ENCODE measurements at regions of chr2 and their contacts with region 1.

Region 1: DNA sequence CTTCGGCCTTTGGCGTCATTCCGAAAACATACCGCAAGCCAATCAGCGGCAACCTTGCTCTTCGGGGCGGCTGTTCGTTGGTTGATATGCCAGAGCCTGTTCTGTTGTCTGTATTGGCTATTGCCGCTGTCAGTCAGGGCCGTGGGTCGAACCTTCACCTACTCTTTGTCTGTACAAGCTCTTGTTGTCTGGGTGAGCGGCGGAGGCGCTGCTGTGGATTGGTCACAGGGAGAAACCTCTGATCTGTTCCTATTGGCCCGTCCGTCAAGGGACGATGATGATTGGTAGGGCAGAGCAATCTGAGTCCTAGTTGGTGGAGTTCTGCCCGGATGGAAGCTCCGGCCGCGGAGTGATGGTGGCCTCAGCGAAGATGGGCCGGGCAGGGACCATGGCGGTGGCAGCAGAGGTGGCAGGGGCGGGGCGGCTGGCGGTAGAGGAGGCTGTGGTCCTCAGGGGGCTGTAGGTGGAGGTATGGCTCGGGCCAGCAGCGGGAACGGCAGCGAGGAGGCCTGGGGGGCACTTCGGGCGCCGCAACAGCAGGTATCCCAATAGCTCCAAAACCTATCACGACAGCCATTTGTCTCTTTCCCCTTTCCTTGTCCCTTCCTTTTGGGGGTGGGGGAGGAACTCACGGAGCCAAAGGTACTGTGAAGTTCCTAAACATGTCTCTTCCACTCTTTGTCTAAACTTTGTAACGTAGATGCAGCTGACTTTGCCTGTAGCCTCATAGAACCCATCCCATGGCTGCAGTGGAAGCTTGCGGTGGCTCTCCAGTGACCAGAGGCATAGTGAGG is at the start of gene WBP1:
- DNase-seq: peak; percentile 100
- ATAC-seq: peak; percentile 87
- H3K4me3 ChIP-seq: peak within 1 kb of the TSS; percentile 70 to 98
- H3K27ac ChIP-seq: peak within 1 kb of the TSS; percentile 89
- H3K4me1 ChIP-seq: peaks cover 12 to 42% of the 10 kb centered on the region in 2 experiments
- H3K27me3 ChIP-seq: no peaks in the 10 kb centered on the region
- CTCF ChIP-seq: no peak
- POLR2A ChIP-seq: peak; percentile 6
- RAD21 ChIP-seq: no peak
- total RNA-seq, gene WBP1: 64.7 TPM

Region 2: GRCh38 chr2:73233154-73233931 is 1225.0 kb before region 1 on chr2 and contains the start of gene PRADC1:
- CTCF ChIA-PET with region 1: no interaction called
- POLR2A ChIA-PET with region 1: no interaction called
- RAD21 ChIA-PET with region 1: no interaction called
- intact Hi-C with region 1: loop called (anchors 10 kb)
- DNase-seq: peak; percentile 99
- ATAC-seq: peak; percentile 89
- H3K4me3 ChIP-seq: peak within 1 kb of the TSS; percentile 90 to 93
- H3K27ac ChIP-seq: peak within 1 kb of the TSS; percentile 88
- H3K4me1 ChIP-seq: peaks cover 10 to 27% of the 10 kb centered on the region in 2 experiments; a peak in 3 of 4 replicates
- H3K27me3 ChIP-seq: no peaks in the 10 kb centered on the region
- CTCF ChIP-seq: no peak
- POLR2A ChIP-seq: no peak
- RAD21 ChIP-seq: no peak
- total RNA-seq, gene PRADC1: 8.6 TPM

Region 3: GRCh38 chr2:74010087-74010661 is 448.2 kb before region 1 on chr2:
- CTCF ChIA-PET with region 1: no interaction called
- POLR2A ChIA-PET with region 1: no interaction called
- RAD21 ChIA-PET with region 1: no interaction called
- intact Hi-C with region 1: no loop called
- DNase-seq: no peak
- ATAC-seq: no peak
- H3K4me3 ChIP-seq: no peak overlapping the region
- H3K27ac ChIP-seq: no peak overlapping the region
- H3K4me1 ChIP-seq: peaks cover 6 to 15% of the 10 kb centered on the region in 2 experiments; a peak in 3 of 4 replicates
- H3K27me3 ChIP-seq: no peaks in the 10 kb centered on the region
- CTCF ChIP-seq: no peak
- POLR2A ChIP-seq: no peak
- RAD21 ChIP-seq: no peak

Region 4: DNA sequence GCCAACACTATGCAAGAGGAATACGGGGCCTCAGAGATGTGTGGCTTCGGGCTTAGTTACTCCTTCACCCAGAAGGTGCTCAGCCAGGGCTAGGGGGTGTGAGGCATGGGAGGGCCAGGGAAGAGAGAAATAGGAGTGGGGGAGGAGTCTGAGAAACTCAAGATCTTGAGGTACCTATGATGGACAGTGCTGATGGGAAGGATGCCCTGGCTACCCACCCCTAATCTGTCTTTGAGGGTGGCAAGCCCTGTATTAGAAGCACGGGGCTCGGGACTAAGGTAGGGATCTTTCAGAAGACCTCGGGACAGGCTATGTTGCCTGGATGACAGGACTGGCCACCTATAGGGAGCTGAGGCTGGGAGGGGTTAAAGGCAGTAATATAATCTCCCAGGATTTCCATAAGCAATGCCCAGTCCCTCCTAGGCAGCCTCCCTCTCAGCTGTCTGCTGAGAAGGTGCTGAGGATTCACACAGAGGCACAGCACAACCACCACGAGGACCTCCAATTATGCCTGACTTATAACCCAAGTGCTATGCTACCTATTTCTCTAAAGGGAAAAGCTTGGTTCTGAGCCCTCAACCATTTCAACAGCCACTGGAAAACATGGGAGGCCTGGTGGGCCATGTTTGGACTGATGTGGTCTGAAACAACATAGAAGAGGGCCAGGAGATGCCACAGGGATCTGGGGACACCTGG is 236.6 kb before region 1 on chr2:
- CTCF ChIA-PET with region 1: no interaction called
- POLR2A ChIA-PET with region 1: no interaction called
- RAD21 ChIA-PET with region 1: no interaction called
- intact Hi-C with region 1: no loop called
- DNase-seq: no peak
- ATAC-seq: peak; percentile 25
- H3K4me3 ChIP-seq: no peak overlapping the region
- H3K27ac ChIP-seq: no peak overlapping the region
- H3K4me1 ChIP-seq: 0 out of 4 replicates have a peak, but pooled peaks cover 0 to 6% of the 10 kb centered on the region in 2 experiments
- H3K27me3 ChIP-seq: no peaks in the 10 kb centered on the region
- CTCF ChIP-seq: no peak
- POLR2A ChIP-seq: no peak
- RAD21 ChIP-seq: no peak

Region 5: DNA sequence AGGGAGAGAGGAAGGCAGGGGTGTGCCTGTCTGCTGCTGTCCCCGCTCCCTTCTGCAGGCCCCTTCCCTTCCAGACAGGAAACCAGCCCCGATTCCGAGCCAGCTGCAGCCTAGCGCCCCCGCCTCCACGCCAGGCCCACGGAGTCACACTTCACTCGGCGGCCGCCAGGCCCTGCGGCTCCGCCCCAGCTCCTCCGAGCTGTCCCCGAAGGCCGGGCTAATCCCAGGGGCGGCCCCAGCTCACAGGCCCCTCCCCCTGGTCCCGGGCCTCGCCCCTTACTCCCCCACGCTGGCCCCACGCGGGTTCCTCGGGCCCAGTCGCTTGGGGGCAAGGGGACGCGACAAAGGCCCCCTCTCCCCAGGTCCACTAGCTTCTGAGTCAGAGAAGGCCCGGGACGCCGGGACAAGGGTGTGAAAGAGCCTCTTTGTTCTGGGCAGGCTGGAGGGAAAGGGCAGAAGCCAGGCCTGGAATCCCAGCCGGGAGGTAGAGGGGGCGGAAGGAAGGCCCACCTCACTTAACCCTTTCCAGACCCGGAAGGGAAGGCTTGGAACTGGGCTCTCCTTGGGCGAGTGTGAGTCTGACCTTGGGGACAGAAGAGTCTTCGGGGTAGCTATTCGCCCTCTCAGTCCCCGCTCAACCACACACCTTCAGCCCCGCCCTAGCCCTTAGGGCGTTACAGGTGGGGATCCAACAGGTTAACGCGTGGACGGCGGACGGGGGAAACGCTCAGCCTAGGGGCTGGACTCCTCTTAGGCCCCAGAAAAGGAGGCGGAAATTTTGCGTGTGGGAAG is 17.8 kb before region 1 on chr2:
- CTCF ChIA-PET with region 1: no interaction called
- POLR2A ChIA-PET with region 1: interaction called, 13 read pairs
- RAD21 ChIA-PET with region 1: interaction called in 1 of 2 experiments, 3 read pairs
- intact Hi-C with region 1: loop called (anchors 1 kb)
- DNase-seq: peak; percentile 80
- ATAC-seq: peak; percentile 84
- H3K4me3 ChIP-seq: peak overlapping the region; percentile 66 to 69
- H3K27ac ChIP-seq: peak overlapping the region; percentile 99
- H3K4me1 ChIP-seq: peaks cover 29 to 47% of the 10 kb centered on the region in 2 experiments
- H3K27me3 ChIP-seq: no peaks in the 10 kb centered on the region
- CTCF ChIP-seq: 0 out of 6 replicates have a peak, but pooled peaks of 1 of the 3 experiments have one; percentile 3
- POLR2A ChIP-seq: no peak
- RAD21 ChIP-seq: no peak

Region 6: GRCh38 chr2:74472086-74472944 is 14.0 kb after region 1 on chr2 and contains the start of gene MRPL53:
- CTCF ChIA-PET with region 1: interaction called, 6 read pairs
- POLR2A ChIA-PET with region 1: interaction called, 21 read pairs
- RAD21 ChIA-PET with region 1: interaction called in 1 of 2 experiments, 3 read pairs
- intact Hi-C with region 1: no loop called
- DNase-seq: peak; percentile 89
- ATAC-seq: peak; percentile 86
- H3K4me3 ChIP-seq: peak within 1 kb of the TSS; percentile 94 to 96
- H3K27ac ChIP-seq: peak within 1 kb of the TSS; percentile 82
- H3K4me1 ChIP-seq: peaks cover 12 to 18% of the 10 kb centered on the region in 2 experiments; a peak in 3 of 4 replicates
- H3K27me3 ChIP-seq: no peaks in the 10 kb centered on the region
- CTCF ChIP-seq: no peak
- POLR2A ChIP-seq: peak; percentile 93
- RAD21 ChIP-seq: no peak
- total RNA-seq, gene MRPL53: 65.4 TPM

Region 7: GRCh38 chr2:74587664-74588277 is 129.4 kb after region 1 on chr2:
- CTCF ChIA-PET with region 1: no interaction called
- POLR2A ChIA-PET with region 1: no interaction called
- RAD21 ChIA-PET with region 1: no interaction called
- intact Hi-C with region 1: no loop called
- DNase-seq: peak; percentile 8
- ATAC-seq: peak; percentile 72
- H3K4me3 ChIP-seq: no peak overlapping the region
- H3K27ac ChIP-seq: no peak overlapping the region
- H3K4me1 ChIP-seq: peaks cover 12 to 15% of the 10 kb centered on the region in 2 experiments
- H3K27me3 ChIP-seq: no peaks in the 10 kb centered on the region
- CTCF ChIP-seq: peak; percentile 32 to 52 (median 37); a peak in 3 of 6 replicates
- POLR2A ChIP-seq: no peak
- RAD21 ChIP-seq: peak; percentile 65